ENCODE measurements at regions of chr17 and their contacts with region 1.

Region 1: GRCh38 chr17:40121181-40122135 is at the start of gene MSL1:
- DNase-seq: peak; percentile 74 to 93 (median 84)
- ATAC-seq: peak; percentile 64
- H3K4me3 ChIP-seq: peak within 1 kb of the TSS; percentile 93
- H3K4me3 Mint-ChIP-seq: peak within 1 kb of the TSS; percentile 89
- H3K27ac ChIP-seq: peak within 1 kb of the TSS; percentile 55 to 83
- H3K27ac Mint-ChIP-seq: peak within 1 kb of the TSS; percentile 70
- H3K4me1 ChIP-seq: peaks cover 24% of the 10 kb centered on the region
- H3K4me1 Mint-ChIP-seq: peaks cover 41% of the 10 kb centered on the region
- H3K27me3 ChIP-seq: no peaks in the 10 kb centered on the region
- H3K27me3 Mint-ChIP-seq: no peaks in the 10 kb centered on the region
- CTCF ChIP-seq: no peak
- total RNA-seq, gene MSL1: 77.0 to 79.2 TPM

Region 2: GRCh38 chr17:40068917-40069750 is 52.3 kb before region 1 on chr17:
- CTCF ChIA-PET with region 1: no interaction called
- POLR2A ChIA-PET with region 1: interaction called, 10 read pairs
- intact Hi-C with region 1: no loop called
- DNase-seq: peak; percentile 68 to 89 (median 80)
- ATAC-seq: peak; percentile 71
- H3K4me3 ChIP-seq: peak overlapping the region; percentile 51
- H3K4me3 Mint-ChIP-seq: peak overlapping the region; percentile 89
- H3K27ac ChIP-seq: peak overlapping the region; percentile 73 to 74
- H3K27ac Mint-ChIP-seq: peak overlapping the region; percentile 96
- H3K4me1 ChIP-seq: peaks cover 85% of the 10 kb centered on the region
- H3K4me1 Mint-ChIP-seq: peaks cover 85% of the 10 kb centered on the region
- H3K27me3 ChIP-seq: no peaks in the 10 kb centered on the region
- H3K27me3 Mint-ChIP-seq: no peaks in the 10 kb centered on the region
- CTCF ChIP-seq: no peak

Region 3: GRCh38 chr17:40098846-40099618 is 22.4 kb before region 1 on chr17:
- CTCF ChIA-PET with region 1: interaction called, 4 read pairs
- POLR2A ChIA-PET with region 1: interaction called, 58 read pairs
- intact Hi-C with region 1: no loop called
- DNase-seq: peak; percentile 99 to 100 (median 99)
- ATAC-seq: peak; percentile 63
- H3K4me3 ChIP-seq: peak overlapping the region; percentile 85
- H3K4me3 Mint-ChIP-seq: peak overlapping the region; percentile 97
- H3K27ac ChIP-seq: peak overlapping the region; percentile 94 to 96
- H3K27ac Mint-ChIP-seq: peak overlapping the region; percentile 91
- H3K4me1 ChIP-seq: peaks cover 97% of the 10 kb centered on the region
- H3K4me1 Mint-ChIP-seq: peaks cover 90% of the 10 kb centered on the region
- H3K27me3 ChIP-seq: no peaks in the 10 kb centered on the region
- H3K27me3 Mint-ChIP-seq: no peaks in the 10 kb centered on the region
- CTCF ChIP-seq: no peak

Region 4: DNA sequence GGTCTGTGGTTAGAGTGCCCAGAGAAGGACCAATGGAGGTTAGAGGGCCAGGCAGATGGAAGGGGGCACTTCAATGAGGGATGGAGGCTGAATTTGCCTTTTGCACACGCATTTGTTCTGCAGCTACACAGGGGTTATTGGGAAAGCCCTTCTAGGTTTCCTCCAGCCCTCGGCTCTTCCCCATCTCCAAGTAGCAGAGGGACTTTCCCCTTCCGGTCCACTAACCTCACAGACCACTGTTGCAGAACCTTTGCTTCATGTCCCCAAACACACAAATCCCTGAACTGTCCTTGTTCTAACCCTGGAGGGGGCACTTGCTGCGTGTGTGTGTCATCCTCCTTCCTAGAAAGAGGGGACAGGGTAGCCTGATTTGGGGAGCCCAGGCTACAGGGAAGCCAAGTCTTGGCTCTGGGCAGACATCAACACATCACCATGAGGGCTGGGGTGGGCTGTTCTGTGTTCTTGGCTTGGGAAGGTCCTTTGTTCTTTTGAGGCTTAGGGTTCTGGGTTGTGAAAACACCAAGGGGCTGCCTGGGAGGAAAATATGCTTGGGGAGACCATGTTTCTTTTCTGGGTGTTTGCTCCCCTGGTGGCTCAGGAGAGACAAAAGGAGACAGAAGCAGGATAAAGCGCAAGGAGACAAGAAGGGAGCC is 13.8 kb before region 1 on chr17:
- CTCF ChIA-PET with region 1: interaction called, 31 read pairs
- POLR2A ChIA-PET with region 1: interaction called, 129 read pairs
- intact Hi-C with region 1: no loop called
- DNase-seq: peak in 3 of 14 experiments; percentile 38 to 70 (median 70)
- ATAC-seq: peak; percentile 5
- H3K4me3 ChIP-seq: peak overlapping the region; percentile 16
- H3K4me3 Mint-ChIP-seq: peak overlapping the region; percentile 82
- H3K27ac ChIP-seq: peak overlapping the region; percentile 94 to 95
- H3K27ac Mint-ChIP-seq: peak overlapping the region; percentile 99
- H3K4me1 ChIP-seq: peaks cover 100% of the 10 kb centered on the region
- H3K4me1 Mint-ChIP-seq: peaks cover 98% of the 10 kb centered on the region
- H3K27me3 ChIP-seq: no peaks in the 10 kb centered on the region
- H3K27me3 Mint-ChIP-seq: no peaks in the 10 kb centered on the region
- CTCF ChIP-seq: no peak

Region 5: GRCh38 chr17:40168262-40168832 is 46.9 kb after region 1 on chr17:
- CTCF ChIA-PET with region 1: interaction called, 6 read pairs
- POLR2A ChIA-PET with region 1: interaction called, 18 read pairs
- intact Hi-C with region 1: no loop called
- DNase-seq: peak in 8 of 14 experiments; percentile 14 to 82 (median 43)
- ATAC-seq: peak; percentile 89
- H3K4me3 ChIP-seq: no peak overlapping the region
- H3K4me3 Mint-ChIP-seq: no peak overlapping the region
- H3K27ac ChIP-seq: no peak overlapping the region
- H3K27ac Mint-ChIP-seq: peak overlapping the region; percentile 80
- H3K4me1 ChIP-seq: no peaks in the 10 kb centered on the region
- H3K4me1 Mint-ChIP-seq: peaks cover 9% of the 10 kb centered on the region
- H3K27me3 ChIP-seq: no peaks in the 10 kb centered on the region
- H3K27me3 Mint-ChIP-seq: no peaks in the 10 kb centered on the region
- CTCF ChIP-seq: peak; percentile 87